CD8-positive, alpha-beta T cell (primary cell): ENCODE measurements at regions of chr5 and their contacts with region 1.

Region 1: GRCh38 chr5:112737463-112738190 is at the start of gene APC:
- DNase-seq: peak; percentile 52 to 88 (median 74)
- ATAC-seq: peak; percentile 96
- H3K4me3 ChIP-seq: peak within 1 kb of the TSS; percentile 62 to 79
- H3K4me3 Mint-ChIP-seq: peak within 1 kb of the TSS; percentile 95
- H3K27ac ChIP-seq: peak within 1 kb of the TSS; percentile 18 to 26
- H3K27ac Mint-ChIP-seq: peak within 1 kb of the TSS; percentile 69
- H3K4me1 ChIP-seq: peaks cover 10% of the 10 kb centered on the region
- H3K4me1 Mint-ChIP-seq: peaks cover 33% of the 10 kb centered on the region
- H3K27me3 ChIP-seq: no peaks in the 10 kb centered on the region
- H3K27me3 Mint-ChIP-seq: no peaks in the 10 kb centered on the region
- CTCF ChIP-seq: no peak
- total RNA-seq, gene APC: 14.5 to 19.1 TPM

Region 2: GRCh38 chr5:111742177-111742994 is 995.2 kb before region 1 on chr5:
- CTCF ChIA-PET with region 1: no interaction called
- POLR2A ChIA-PET with region 1: no interaction called
- intact Hi-C with region 1: no loop called
- DNase-seq: no peak
- ATAC-seq: no peak
- H3K4me3 ChIP-seq: no peak overlapping the region
- H3K4me3 Mint-ChIP-seq: peak overlapping the region; percentile 56
- H3K27ac ChIP-seq: no peak overlapping the region
- H3K27ac Mint-ChIP-seq: peak overlapping the region; percentile 29
- H3K4me1 ChIP-seq: peaks cover 8% of the 10 kb centered on the region
- H3K4me1 Mint-ChIP-seq: peaks cover 15% of the 10 kb centered on the region
- H3K27me3 ChIP-seq: peaks cover 0 to 3% of the 10 kb centered on the region in 2 experiments
- H3K27me3 Mint-ChIP-seq: no peaks in the 10 kb centered on the region
- CTCF ChIP-seq: no peak

Region 3: GRCh38 chr5:112691758-112692157 is 45.9 kb before region 1 on chr5:
- CTCF ChIA-PET with region 1: no interaction called
- POLR2A ChIA-PET with region 1: no interaction called
- intact Hi-C with region 1: loop called in 1 of 2 experiments (anchors 5 kb)
- DNase-seq: peak in 3 of 9 experiments; percentile 10 to 74 (median 40)
- ATAC-seq: peak; percentile 36
- H3K4me3 ChIP-seq: no peak overlapping the region
- H3K4me3 Mint-ChIP-seq: no peak overlapping the region
- H3K27ac ChIP-seq: no peak overlapping the region
- H3K27ac Mint-ChIP-seq: no peak overlapping the region
- H3K4me1 ChIP-seq: no peaks in the 10 kb centered on the region
- H3K4me1 Mint-ChIP-seq: no peaks in the 10 kb centered on the region
- H3K27me3 ChIP-seq: peaks cover 0 to 2% of the 10 kb centered on the region in 2 experiments
- H3K27me3 Mint-ChIP-seq: peaks cover 38% of the 10 kb centered on the region
- CTCF ChIP-seq: no peak

Region 4: DNA sequence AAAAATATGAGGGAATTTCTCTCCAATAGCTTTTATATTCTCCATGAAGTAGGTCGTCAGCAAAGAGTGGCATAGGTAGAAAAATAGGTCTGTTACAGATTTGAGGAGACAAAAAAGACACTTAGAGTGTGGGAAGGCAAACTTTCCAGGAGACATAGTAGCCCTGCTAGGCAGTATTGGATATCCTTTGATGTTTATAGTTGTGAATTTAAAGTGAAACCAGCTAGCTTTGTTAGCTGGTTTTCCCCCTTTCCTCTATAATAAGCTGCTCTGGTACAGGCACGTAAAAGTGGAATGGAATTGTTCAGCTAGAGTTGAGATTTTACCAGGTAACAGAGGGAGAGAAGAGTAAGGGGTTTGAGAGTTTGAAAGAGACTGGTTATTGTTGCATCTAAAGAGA is 17.1 kb before region 1 on chr5:
- CTCF ChIA-PET with region 1: interaction called, 4 read pairs
- POLR2A ChIA-PET with region 1: no interaction called
- intact Hi-C with region 1: loop called in 1 of 2 experiments (anchors 2 kb)
- DNase-seq: no peak
- ATAC-seq: no peak
- H3K4me3 ChIP-seq: no peak overlapping the region
- H3K4me3 Mint-ChIP-seq: no peak overlapping the region
- H3K27ac ChIP-seq: no peak overlapping the region
- H3K27ac Mint-ChIP-seq: no peak overlapping the region
- H3K4me1 ChIP-seq: no peaks in the 10 kb centered on the region
- H3K4me1 Mint-ChIP-seq: peaks cover 66% of the 10 kb centered on the region
- H3K27me3 ChIP-seq: no peaks in the 10 kb centered on the region
- H3K27me3 Mint-ChIP-seq: no peaks in the 10 kb centered on the region
- CTCF ChIP-seq: no peak

Region 5: GRCh38 chr5:112811023-112811422 is 73.4 kb after region 1 on chr5:
- CTCF ChIA-PET with region 1: no interaction called
- POLR2A ChIA-PET with region 1: no interaction called
- intact Hi-C with region 1: no loop called
- DNase-seq: no peak
- ATAC-seq: no peak
- H3K4me3 ChIP-seq: no peak overlapping the region
- H3K4me3 Mint-ChIP-seq: no peak overlapping the region
- H3K27ac ChIP-seq: no peak overlapping the region
- H3K27ac Mint-ChIP-seq: no peak overlapping the region
- H3K4me1 ChIP-seq: no peaks in the 10 kb centered on the region
- H3K4me1 Mint-ChIP-seq: no peaks in the 10 kb centered on the region
- H3K27me3 ChIP-seq: no peaks in the 10 kb centered on the region
- H3K27me3 Mint-ChIP-seq: no peaks in the 10 kb centered on the region
- CTCF ChIP-seq: no peak